ENCODE measurements at regions of chr14 and their contacts with region 1.

Region 1: DNA sequence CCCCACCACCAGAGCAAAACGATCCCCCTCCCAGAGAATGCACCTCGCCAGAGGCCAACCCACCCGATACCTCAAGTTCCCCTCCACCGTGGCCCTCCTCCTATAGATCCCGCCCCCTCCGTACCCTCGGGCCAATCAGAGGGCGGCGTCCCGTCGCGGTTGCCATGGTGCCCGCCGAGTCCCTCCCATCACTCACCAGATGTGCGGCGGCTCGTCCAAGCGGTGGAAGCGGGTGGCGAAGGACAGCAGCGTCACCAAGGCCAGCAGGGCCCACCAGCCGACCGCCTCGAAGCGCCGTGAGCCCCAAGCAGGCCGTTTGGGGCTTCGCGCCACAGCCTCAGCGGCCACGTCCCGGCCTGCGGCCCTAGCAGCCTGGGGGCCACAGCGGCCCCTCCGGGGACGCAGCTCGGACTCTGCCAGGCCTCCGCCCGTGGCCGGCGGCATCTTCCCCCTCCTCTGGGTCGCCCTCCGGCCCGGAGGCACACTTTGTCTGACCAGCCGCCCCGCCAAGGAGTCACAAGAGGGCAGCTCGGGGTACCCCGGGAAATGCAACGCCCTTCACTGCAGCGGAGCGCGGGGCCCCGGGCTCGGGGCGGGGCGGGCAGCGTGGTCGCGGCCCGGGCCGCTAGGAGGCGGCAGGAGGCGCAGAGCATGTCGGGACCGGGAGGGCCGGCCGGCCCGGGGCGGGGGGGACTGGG is at the start of gene POMT2:
- DNase-seq: peak; percentile 93
- ATAC-seq: peak; percentile 54
- H3K4me3 Mint-ChIP-seq: peak within 1 kb of the TSS; percentile 99
- H3K27ac Mint-ChIP-seq: peak within 1 kb of the TSS; percentile 100
- H3K4me1 Mint-ChIP-seq: peaks cover 19% of the 10 kb centered on the region
- H3K27me3 Mint-ChIP-seq: no peaks in the 10 kb centered on the region
- CTCF ChIP-seq: no peak
- total RNA-seq, gene POMT2: 28.7 and 30.8 TPM in 2 replicates

Region 2: GRCh38 chr14:76962303-76962660 is 358.1 kb before region 1 on chr14:
- CTCF ChIA-PET with region 1: no interaction called
- POLR2A ChIA-PET with region 1: interaction called, 3 read pairs
- intact Hi-C with region 1: loop called (anchors 5 kb)
- DNase-seq: no peak
- ATAC-seq: no peak
- H3K4me3 Mint-ChIP-seq: peak overlapping the region; percentile 84
- H3K27ac Mint-ChIP-seq: peak overlapping the region; percentile 94
- H3K4me1 Mint-ChIP-seq: peaks cover 78% of the 10 kb centered on the region
- H3K27me3 Mint-ChIP-seq: no peaks in the 10 kb centered on the region
- CTCF ChIP-seq: no peak

Region 3: GRCh38 chr14:76997256-76997970 is 323.0 kb before region 1 on chr14:
- CTCF ChIA-PET with region 1: no interaction called
- POLR2A ChIA-PET with region 1: no interaction called
- intact Hi-C with region 1: no loop called
- DNase-seq: no peak
- ATAC-seq: no peak
- H3K4me3 Mint-ChIP-seq: no peak overlapping the region
- H3K27ac Mint-ChIP-seq: no peak overlapping the region
- H3K4me1 Mint-ChIP-seq: peaks cover 40% of the 10 kb centered on the region
- H3K27me3 Mint-ChIP-seq: no peaks in the 10 kb centered on the region
- CTCF ChIP-seq: no peak

Region 4: DNA sequence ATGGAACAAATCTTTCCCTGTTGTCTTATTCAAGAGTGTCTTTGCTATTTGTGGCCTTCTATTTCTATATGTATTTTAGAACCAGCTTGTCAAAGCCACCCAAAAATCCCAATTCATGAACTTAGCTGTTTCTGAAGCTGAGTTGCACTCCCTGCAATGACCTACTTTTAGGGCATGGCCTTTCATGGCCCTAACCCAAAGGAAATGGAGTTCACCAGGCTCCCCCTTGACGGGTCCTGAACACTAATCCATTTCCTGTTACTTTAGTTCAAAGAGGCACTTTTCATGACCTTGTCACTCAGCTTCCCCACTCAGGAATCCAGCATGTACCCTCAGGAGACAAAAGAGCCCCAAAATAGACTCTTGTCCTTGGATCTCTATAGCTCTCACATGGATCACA is 48.9 kb after region 1 on chr14:
- CTCF ChIA-PET with region 1: interaction called, 7 read pairs
- POLR2A ChIA-PET with region 1: interaction called, 96 read pairs
- intact Hi-C with region 1: loop called (anchors 1 kb)
- DNase-seq: no peak
- ATAC-seq: no peak
- H3K4me3 Mint-ChIP-seq: peak overlapping the region; percentile 8
- H3K27ac Mint-ChIP-seq: peak overlapping the region; percentile 22
- H3K4me1 Mint-ChIP-seq: peaks cover 79% of the 10 kb centered on the region
- H3K27me3 Mint-ChIP-seq: no peaks in the 10 kb centered on the region
- CTCF ChIP-seq: no peak

Region 5: GRCh38 chr14:77554207-77554606 is 233.8 kb after region 1 on chr14:
- CTCF ChIA-PET with region 1: interaction called, 4 read pairs
- POLR2A ChIA-PET with region 1: no interaction called
- intact Hi-C with region 1: loop called (anchors 1 kb)
- DNase-seq: no peak
- ATAC-seq: no peak
- H3K4me3 Mint-ChIP-seq: no peak overlapping the region
- H3K27ac Mint-ChIP-seq: peak overlapping the region; percentile 43
- H3K4me1 Mint-ChIP-seq: no peaks in the 10 kb centered on the region
- H3K27me3 Mint-ChIP-seq: no peaks in the 10 kb centered on the region
- CTCF ChIP-seq: no peak

Region 6: GRCh38 chr14:77707724-77708408 is 387.5 kb after region 1 on chr14 and contains the starts of genes ALKBH1 and SLIRP:
- CTCF ChIA-PET with region 1: no interaction called
- POLR2A ChIA-PET with region 1: no interaction called
- intact Hi-C with region 1: loop called (anchors 2 kb)
- DNase-seq: peak; percentile 73
- ATAC-seq: peak; percentile 98
- H3K4me3 Mint-ChIP-seq: peak within 1 kb of the TSS; percentile 96
- H3K27ac Mint-ChIP-seq: peak within 1 kb of the TSS; percentile 91
- H3K4me1 Mint-ChIP-seq: peaks cover 45% of the 10 kb centered on the region
- H3K27me3 Mint-ChIP-seq: no peaks in the 10 kb centered on the region
- CTCF ChIP-seq: no peak
- total RNA-seq, gene ALKBH1: 14.4 and 18.0 TPM in 2 replicates
- total RNA-seq, gene SLIRP: 58.6 and 61.7 TPM in 2 replicates

Region 7: GRCh38 chr14:77799863-77800730 is 479.7 kb after region 1 on chr14 and contains the start of gene ADCK1:
- CTCF ChIA-PET with region 1: no interaction called
- POLR2A ChIA-PET with region 1: no interaction called
- intact Hi-C with region 1: loop called (anchors 1 kb)
- DNase-seq: peak; percentile 86
- ATAC-seq: peak; percentile 91
- H3K4me3 Mint-ChIP-seq: peak within 1 kb of the TSS; percentile 88
- H3K27ac Mint-ChIP-seq: peak within 1 kb of the TSS; percentile 88
- H3K4me1 Mint-ChIP-seq: peaks cover 7% of the 10 kb centered on the region
- H3K27me3 Mint-ChIP-seq: no peaks in the 10 kb centered on the region
- CTCF ChIP-seq: no peak
- total RNA-seq, gene ADCK1: 8.6 and 10.4 TPM in 2 replicates